Left ventricle myocardium superior (tissue), 1 donor: ENCODE measurements at regions of chr14 and their contacts with region 1.

Region 1: DNA sequence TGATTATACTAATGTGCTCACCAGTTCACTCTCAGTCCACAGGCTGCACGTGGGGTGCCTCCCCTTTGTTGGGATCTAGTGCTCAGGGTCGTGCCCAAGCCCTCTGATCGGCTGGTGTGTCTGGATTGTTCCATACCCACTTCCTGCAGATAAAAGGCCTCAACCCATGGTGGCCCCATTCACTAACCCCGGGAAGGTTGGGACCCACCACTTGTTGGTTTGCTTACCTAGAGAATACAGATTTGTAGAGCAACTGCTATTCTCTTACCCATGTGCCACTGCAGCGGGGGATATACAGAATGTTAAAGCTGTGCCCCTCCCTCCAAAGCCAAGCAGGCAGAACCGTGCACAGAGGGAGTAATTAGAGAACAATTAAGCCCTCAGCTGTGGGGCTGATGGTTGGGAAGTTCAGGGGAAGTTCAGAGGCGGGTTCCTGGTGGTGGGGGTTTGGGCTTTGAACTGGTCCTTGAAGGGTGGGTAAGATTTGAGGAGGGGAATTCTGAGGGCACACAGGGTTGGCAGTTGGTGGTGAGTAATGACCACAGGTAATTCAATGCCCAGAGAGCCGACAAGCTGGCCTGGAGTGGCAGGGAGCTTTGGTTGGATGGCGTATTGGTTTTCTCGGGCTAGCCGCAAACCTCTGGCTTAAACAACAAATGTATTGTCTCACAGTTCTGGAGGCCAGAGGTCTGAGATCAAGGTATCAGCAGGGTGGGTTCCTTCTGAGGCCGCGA is 68.8 kb downstream of the ADCK1 start:
- DNase-seq: no peak
- ATAC-seq: no peak

Region 2: DNA sequence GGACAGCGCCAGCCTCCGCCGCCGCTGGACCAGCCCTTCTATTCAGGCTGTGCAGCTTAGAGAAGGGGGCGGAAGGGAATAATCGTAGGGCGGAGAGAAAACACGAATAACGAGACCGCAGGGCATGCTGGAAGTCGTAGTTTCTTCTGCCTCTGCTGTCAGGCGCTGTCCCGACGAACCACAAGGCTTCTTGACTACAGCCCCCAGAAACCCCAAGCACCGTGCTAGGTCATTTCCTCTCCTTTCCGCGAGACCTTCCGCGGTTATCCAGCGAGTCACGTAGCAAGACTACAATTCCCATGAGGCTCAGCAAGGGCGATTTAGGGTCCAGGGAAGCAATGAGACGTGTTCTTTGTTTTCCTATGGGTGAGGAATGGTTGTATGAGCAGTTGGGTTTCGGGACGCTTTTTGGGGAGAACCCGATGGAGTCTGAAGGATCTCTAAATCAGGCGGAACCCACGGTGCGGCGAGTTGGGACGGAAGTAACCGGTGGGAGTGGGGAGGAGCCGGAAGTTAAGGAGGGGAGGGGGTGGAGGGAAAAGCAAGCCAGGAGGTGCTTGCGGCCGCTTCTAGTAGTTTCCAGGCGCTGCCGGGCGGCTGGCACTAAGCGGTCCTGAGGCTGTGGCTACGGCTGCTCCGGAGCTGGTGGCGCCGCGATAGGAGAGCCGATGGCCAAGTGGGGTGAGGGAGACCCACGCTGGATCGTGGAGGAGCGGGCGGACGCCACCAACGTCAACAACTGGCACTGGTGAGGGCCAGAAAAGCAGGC is 411.0 kb before region 1 on chr14 and contains the starts of genes AHSA1 and VIPAS39:
- intact Hi-C with region 1: no loop called
- DNase-seq: peak; percentile 93
- ATAC-seq: peak; percentile 99
- total RNA-seq, gene AHSA1: 231 TPM
- total RNA-seq, gene VIPAS39: 12.6 TPM

Region 3: GRCh38 chr14:77912754-77913556 is 44.2 kb after region 1 on chr14:
- intact Hi-C with region 1: loop called (anchors 2 kb)
- DNase-seq: no peak
- ATAC-seq: no peak